ENCODE measurements at regions of chr15 and their contacts with region 1.

Region 1: DNA sequence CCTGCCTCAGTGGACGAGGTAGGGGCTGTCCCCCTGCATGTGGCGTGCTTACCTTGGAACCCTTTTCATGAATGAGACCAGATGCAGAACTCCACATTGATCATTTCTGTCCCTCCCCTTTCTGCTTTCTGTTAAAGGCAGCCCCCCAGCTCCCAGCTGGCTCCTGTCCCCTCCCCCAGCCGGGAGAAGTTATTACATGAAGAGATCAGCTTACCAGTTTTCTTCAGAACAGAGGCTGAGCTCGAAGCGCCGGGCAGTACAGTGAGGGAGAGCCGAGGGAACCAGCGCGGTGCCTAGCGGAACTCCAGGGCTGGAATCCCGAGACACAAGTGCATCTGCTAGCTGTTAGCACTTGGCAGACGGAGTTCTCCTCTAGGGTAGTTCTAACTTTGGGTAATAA is 263.3 kb upstream of the NR2E3 start:
- DNase-seq: no peak
- ATAC-seq: peak in 2 of 4 donors; percentile 39 to 67
- H3K4me3 ChIP-seq: no peak overlapping the region
- H3K27ac ChIP-seq: no peak overlapping the region
- H3K4me1 ChIP-seq: peaks cover 7% of the 10 kb centered on the region
- H3K27me3 ChIP-seq: no peaks in the 10 kb centered on the region
- CTCF ChIP-seq: no peak

Region 2: DNA sequence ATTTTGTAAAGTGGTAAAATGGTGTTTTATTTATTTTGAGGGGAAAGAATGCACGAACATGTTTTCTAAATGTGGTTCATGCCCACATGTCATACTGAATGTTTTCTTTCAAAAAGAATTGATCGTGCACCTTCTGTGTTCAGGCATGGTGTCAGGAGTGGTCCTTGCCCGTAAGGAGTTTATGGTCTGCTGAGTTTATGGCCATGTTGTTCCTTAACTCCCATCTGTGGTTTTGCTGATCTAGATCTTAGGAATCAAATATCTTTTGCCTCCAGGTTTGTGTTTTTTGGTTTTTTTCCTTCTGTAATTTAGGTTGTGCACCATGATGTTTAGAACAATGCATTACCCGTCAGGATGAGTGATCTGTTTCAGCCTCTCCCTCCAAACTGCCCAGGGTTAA is 41.0 kb before region 1 on chr15:
- intact Hi-C with region 1: loop called in 1 of 2 experiments (anchors 2 kb)
- DNase-seq: no peak
- ATAC-seq: no peak
- H3K4me3 ChIP-seq: no peak overlapping the region
- H3K27ac ChIP-seq: no peak overlapping the region
- H3K4me1 ChIP-seq: no peaks in the 10 kb centered on the region
- H3K27me3 ChIP-seq: no peaks in the 10 kb centered on the region
- CTCF ChIP-seq: no peak

Region 3: DNA sequence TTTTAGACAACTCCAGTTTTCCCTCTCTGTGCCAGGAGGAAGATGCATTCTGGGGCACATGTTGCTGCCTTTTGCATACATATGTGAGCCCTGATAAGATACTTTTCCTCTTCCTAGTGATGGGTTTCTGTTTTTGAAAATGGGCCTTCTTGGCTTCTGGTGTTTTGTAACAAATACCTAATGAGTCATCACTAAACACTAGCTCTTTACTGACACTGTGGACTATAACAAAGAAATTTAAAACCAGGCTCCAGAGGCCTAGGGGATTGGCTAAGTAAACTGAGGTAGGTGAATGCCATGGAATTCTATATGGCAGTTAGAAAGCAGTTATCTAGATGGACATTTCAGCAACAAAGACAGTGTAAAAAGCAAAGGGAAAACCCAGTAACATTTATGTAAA is 170.0 kb after region 1 on chr15:
- intact Hi-C with region 1: no loop called
- DNase-seq: no peak
- ATAC-seq: no peak
- H3K4me3 ChIP-seq: no peak overlapping the region
- H3K27ac ChIP-seq: no peak overlapping the region
- H3K4me1 ChIP-seq: no peaks in the 10 kb centered on the region
- H3K27me3 ChIP-seq: no peaks in the 10 kb centered on the region
- CTCF ChIP-seq: no peak

Measured in psoas muscle (tissue), 8 donors.